ENCODE measurements at regions of chr16 and their contacts with region 1.

Region 1: GRCh38 chr16:29784901-29785500 is 5.5 kb upstream of the KIF22 start:
- DNase-seq: no peak
- ATAC-seq: peak; percentile 89
- H3K4me3 ChIP-seq: peak overlapping the region; percentile 15; the same call in 1 of the 2 replicates
- H3K27ac ChIP-seq: no peak overlapping the region
- H3K4me1 ChIP-seq: peaks cover 13% of the 10 kb centered on the region
- H3K27me3 ChIP-seq: no peaks in the 10 kb centered on the region
- CTCF ChIP-seq: peak; percentile 63 to 84 (median 82)
- EP300 ChIP-seq: no peak
- POLR2A ChIP-seq: 0 out of 2 replicates have a peak, but pooled peaks have one; percentile 36
- RAD21 ChIP-seq: peak; percentile 60

Region 2: GRCh38 chr16:29745853-29746345 is 39.1 kb before region 1 on chr16 and contains the start of gene C16orf54:
- CTCF ChIA-PET with region 1: interaction called, 6 read pairs
- POLR2A ChIA-PET with region 1: interaction called, 4 read pairs
- RAD21 ChIA-PET with region 1: interaction called, 4 read pairs
- SMC1A ChIA-PET with region 1: interaction called, 5 read pairs
- in situ Hi-C with region 1: no loop called
- intact Hi-C with region 1: loop called (anchors 5 kb)
- DNase-seq: peak; percentile 89
- ATAC-seq: peak; percentile 95
- H3K4me3 ChIP-seq: peak within 1 kb of the TSS; percentile 62
- H3K27ac ChIP-seq: peak within 1 kb of the TSS; percentile 90
- H3K4me1 ChIP-seq: peaks cover 39% of the 10 kb centered on the region
- H3K27me3 ChIP-seq: no peaks in the 10 kb centered on the region
- CTCF ChIP-seq: no peak
- EP300 ChIP-seq: peak; percentile 59 to 87; a peak in 1 of 4 replicates
- POLR2A ChIP-seq: peak; percentile 71; the same call in 1 of the 2 replicates
- RAD21 ChIP-seq: no peak
- polyA plus RNA-seq, gene C16orf54: 2.1 to 2.4 TPM

Region 3: GRCh38 chr16:29774730-29775129 is 10.3 kb before region 1 on chr16:
- CTCF ChIA-PET with region 1: interaction called, 11 read pairs
- POLR2A ChIA-PET with region 1: interaction called, 5 read pairs
- RAD21 ChIA-PET with region 1: no interaction called
- SMC1A ChIA-PET with region 1: interaction called, 3 read pairs
- in situ Hi-C with region 1: no loop called
- intact Hi-C with region 1: no loop called
- DNase-seq: no peak
- ATAC-seq: no peak
- H3K4me3 ChIP-seq: no peak overlapping the region
- H3K27ac ChIP-seq: no peak overlapping the region
- H3K4me1 ChIP-seq: no peaks in the 10 kb centered on the region
- H3K27me3 ChIP-seq: no peaks in the 10 kb centered on the region
- CTCF ChIP-seq: no peak
- EP300 ChIP-seq: no peak
- POLR2A ChIP-seq: no peak
- RAD21 ChIP-seq: no peak